ENCODE measurements at regions of chr3 and their contacts with region 1.

Region 1: GRCh38 chr3:127646501-127647046 is 17.6 kb downstream of the PODXL2 start:
- DNase-seq: no peak
- H3K4me3 ChIP-seq: no peak overlapping the region
- H3K27ac ChIP-seq: no peak overlapping the region
- H3K4me1 ChIP-seq: no peaks in the 10 kb centered on the region
- H3K27me3 ChIP-seq: no peaks in the 10 kb centered on the region
- CTCF ChIP-seq: no peak
- POLR2A ChIP-seq: no peak

Region 2: DNA sequence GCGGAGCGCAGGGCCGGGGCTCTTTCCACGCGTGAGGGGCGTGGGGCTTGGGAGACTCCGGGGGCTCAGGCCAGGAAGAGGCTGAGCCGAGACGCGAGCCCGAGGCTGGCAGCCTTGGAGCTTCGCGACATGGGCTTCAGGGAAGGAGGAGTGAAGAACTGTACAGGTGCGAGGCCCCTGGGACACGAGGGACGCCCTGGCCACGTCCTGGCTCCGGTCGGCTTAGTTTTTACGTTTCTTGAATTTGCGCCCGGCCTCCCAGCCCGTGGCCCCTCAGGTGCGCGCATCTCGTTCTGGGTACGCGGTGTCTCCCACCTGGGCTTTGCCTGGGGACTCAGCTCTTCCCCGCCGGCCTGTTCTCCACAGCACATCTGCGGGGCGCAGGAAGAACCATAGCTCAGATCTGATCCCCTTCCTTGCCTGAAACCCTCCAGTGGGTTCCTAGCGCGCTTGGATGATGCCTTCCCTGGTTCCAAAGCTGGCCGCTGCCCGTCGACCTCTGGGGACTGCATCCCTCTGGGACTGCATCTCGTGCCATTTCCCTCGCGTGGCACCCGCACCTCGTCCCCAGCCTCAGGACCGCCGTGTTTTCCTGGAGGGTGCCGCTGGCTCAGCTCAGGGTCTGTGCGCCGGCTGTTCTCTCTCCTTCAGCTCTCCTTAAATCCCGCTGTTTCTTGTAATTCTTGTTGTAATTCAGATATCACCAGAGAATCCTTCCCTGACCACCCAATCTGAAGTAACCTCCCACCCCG is 941.9 kb before region 1 on chr3:
- CTCF ChIA-PET with region 1: no interaction called
- POLR2A ChIA-PET with region 1: no interaction called
- dilution Hi-C with region 1: no loop called
- intact Hi-C with region 1: no loop called
- DNase-seq: no peak
- H3K4me3 ChIP-seq: peak overlapping the region; percentile 31 to 45 (median 35)
- H3K27ac ChIP-seq: no peak overlapping the region
- H3K4me1 ChIP-seq: peaks cover 10% of the 10 kb centered on the region
- H3K27me3 ChIP-seq: peaks cover 4 to 18% of the 10 kb centered on the region in 2 experiments
- CTCF ChIP-seq: no peak
- POLR2A ChIP-seq: no peak

Region 3: DNA sequence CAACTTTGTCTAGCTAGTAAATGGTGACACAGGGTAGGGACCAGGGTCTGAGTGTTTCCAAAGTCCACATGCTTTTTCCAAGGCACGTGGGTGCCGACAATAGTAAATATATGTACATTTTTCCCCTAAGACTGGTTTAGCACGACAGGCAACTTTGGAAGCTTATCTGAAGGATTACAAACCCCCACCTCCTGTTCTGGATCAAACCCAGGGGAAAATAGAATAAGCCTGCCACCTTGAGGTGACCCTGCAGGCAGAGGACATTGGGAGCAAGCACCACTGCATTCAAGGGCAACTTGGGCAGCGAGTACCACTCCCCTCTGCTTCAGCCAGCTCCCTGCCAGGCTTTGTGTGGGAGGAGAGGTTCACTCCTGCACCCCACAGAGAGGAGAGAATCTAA is 313.3 kb after region 1 on chr3:
- CTCF ChIA-PET with region 1: interaction called, 41 read pairs
- POLR2A ChIA-PET with region 1: no interaction called
- dilution Hi-C with region 1: no loop called
- intact Hi-C with region 1: no loop called
- DNase-seq: peak; percentile 31
- H3K4me3 ChIP-seq: no peak overlapping the region
- H3K27ac ChIP-seq: no peak overlapping the region
- H3K4me1 ChIP-seq: no peaks in the 10 kb centered on the region
- H3K27me3 ChIP-seq: peaks cover 0 to 11% of the 10 kb centered on the region in 2 experiments
- CTCF ChIP-seq: peak in 1 of 2 donors; percentile 25
- POLR2A ChIP-seq: no peak

Measured in endothelial cell of umbilical vein (primary cell).